WTC11 (cell line): ENCODE measurements at regions of chr18 and their contacts with region 1.

Region 1: DNA sequence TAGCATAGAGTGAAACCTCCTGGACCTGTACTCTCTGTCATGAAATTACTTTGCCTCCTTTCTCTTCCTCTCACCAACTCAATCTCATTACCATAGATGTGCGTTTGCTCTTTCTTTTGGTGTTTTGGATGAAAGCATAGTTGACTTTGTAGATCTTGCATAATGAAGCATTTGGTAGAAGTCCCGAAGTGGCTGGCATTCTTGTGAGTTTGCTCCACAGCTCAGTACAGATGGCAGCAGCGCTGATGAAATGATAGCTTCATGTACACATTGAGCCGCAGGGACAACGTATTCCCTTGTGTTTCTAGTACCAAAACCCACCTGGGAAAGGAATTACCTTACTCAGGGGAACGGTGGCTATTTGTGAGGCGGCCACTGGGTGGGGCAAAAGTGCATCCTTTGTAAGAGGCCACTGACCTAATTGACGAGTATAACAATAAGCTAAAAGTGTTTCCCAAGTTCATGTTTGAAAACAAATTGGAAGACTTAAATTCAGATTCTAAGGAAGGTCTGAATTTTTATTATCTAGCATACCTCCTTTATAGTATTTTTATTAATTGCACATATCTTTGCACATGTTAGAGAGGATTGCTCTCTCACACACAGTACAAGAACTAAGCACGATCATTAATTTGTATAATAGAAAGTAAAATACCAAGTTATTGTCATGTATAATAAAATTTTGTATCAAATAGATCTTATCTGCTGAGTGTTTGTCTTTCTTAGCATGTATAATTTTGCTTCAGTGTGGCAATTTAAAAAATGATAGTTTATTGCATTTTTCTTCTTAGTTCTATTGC is 25.4 kb upstream of the CDH7 start:
- DNase-seq: peak; percentile 74
- ATAC-seq: peak; percentile 98
- H3K4me3 Mint-ChIP-seq: no peak overlapping the region; the same call in 1 of the 2 replicates
- H3K27ac Mint-ChIP-seq: no peak overlapping the region
- H3K4me1 Mint-ChIP-seq: peaks cover 15% of the 10 kb centered on the region
- H3K27me3 Mint-ChIP-seq: no peaks in the 10 kb centered on the region
- CTCF ChIP-seq: peak; percentile 66

Region 2: DNA sequence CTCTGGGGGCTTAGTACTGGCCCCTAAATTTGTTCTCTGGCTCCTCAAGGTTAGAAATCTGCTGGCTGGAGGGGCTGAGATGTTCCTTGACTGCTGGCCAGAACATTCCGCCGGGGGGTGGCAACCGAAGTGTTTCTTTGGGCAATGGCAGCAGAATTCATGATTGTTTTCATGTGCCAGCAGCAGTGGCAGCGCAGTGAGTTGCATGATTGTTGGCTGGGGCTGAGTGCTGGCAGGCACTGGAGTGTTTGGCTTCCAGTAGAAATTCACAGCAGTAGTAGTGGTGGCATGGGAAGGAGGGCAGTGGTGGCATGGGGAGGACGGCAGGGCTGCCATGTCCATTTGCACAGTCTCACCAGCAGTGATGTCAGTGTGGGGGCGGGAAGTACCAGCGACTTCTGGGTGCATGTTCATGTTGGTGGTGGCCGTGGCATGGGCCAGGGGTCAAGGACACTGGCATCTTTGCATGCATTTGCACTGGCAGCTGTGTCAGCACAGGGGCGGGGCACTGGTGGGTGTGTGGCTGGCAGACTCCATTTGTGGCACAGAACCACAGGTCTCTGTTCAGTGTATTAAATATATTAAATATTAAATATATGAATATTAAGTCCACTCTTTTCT is 105.3 kb before region 1 on chr18:
- CTCF ChIA-PET with region 1: no interaction called
- POLR2A ChIA-PET with region 1: no interaction called
- DNase-seq: no peak
- ATAC-seq: no peak
- H3K4me3 Mint-ChIP-seq: no peak overlapping the region
- H3K27ac Mint-ChIP-seq: no peak overlapping the region
- H3K4me1 Mint-ChIP-seq: peaks cover 9% of the 10 kb centered on the region
- H3K27me3 Mint-ChIP-seq: peaks cover 27% of the 10 kb centered on the region
- CTCF ChIP-seq: no peak

Region 3: DNA sequence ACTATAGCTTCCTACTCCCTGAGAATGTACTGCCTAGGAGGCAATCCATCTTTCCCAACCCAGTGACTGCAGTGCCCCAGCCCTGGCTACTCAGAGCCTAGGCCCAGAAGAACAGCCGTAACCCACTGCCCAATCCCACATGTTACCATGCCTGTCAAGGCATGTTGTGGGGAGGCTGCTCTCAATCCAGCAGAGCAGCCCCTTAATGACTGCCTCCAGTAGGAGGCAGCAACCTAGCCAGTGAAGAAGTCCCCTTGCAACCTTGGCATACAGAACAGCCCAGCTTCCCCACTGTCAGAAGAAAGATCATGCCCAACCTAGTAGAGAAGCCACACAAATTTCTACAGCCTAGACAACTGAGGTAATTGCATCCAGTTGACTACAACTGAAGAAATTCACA is 18.8 kb before region 1 on chr18:
- CTCF ChIA-PET with region 1: interaction called, 10 read pairs
- POLR2A ChIA-PET with region 1: no interaction called
- DNase-seq: peak; percentile 12
- ATAC-seq: peak; percentile 92
- H3K4me3 Mint-ChIP-seq: no peak overlapping the region
- H3K27ac Mint-ChIP-seq: no peak overlapping the region
- H3K4me1 Mint-ChIP-seq: no peaks in the 10 kb centered on the region
- H3K27me3 Mint-ChIP-seq: no peaks in the 10 kb centered on the region
- CTCF ChIP-seq: no peak

Region 4: DNA sequence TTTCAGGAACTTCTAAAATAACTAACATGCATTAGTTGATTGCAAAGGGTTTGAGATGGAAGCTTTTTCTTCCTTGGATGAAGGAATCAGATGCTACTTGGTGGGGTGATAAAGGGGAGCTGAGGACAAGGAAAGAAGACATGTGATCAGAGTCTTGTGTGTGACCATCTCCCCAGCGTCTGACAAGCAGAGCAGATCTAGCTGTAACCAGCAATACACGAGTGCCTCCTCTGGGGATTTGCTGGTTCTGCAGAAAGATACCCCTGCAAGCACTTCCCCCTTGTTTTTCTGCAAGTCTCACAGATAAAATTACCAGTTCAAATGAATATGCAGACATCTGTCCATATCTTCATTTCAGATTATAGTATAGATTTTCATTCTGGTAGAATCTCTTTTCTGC is 28.1 kb after region 1 on chr18:
- CTCF ChIA-PET with region 1: interaction called, 11 read pairs
- POLR2A ChIA-PET with region 1: no interaction called
- DNase-seq: peak; percentile 53
- ATAC-seq: peak; percentile 60
- H3K4me3 Mint-ChIP-seq: no peak overlapping the region
- H3K27ac Mint-ChIP-seq: no peak overlapping the region
- H3K4me1 Mint-ChIP-seq: peaks cover 27% of the 10 kb centered on the region
- H3K27me3 Mint-ChIP-seq: peaks cover 46% of the 10 kb centered on the region
- CTCF ChIP-seq: no peak